ENCODE measurements at regions of chr1 and their contacts with region 1.

Region 1: GRCh38 chr1:98794196-98794886 is 132.8 kb downstream of the SNX7 start:
- ATAC-seq: peak; percentile 44 to 95 (median 73)
- H3K4me3 ChIP-seq: no peak overlapping the region
- H3K27ac ChIP-seq: no peak overlapping the region
- H3K4me1 ChIP-seq: no peaks in the 10 kb centered on the region

Region 2: DNA sequence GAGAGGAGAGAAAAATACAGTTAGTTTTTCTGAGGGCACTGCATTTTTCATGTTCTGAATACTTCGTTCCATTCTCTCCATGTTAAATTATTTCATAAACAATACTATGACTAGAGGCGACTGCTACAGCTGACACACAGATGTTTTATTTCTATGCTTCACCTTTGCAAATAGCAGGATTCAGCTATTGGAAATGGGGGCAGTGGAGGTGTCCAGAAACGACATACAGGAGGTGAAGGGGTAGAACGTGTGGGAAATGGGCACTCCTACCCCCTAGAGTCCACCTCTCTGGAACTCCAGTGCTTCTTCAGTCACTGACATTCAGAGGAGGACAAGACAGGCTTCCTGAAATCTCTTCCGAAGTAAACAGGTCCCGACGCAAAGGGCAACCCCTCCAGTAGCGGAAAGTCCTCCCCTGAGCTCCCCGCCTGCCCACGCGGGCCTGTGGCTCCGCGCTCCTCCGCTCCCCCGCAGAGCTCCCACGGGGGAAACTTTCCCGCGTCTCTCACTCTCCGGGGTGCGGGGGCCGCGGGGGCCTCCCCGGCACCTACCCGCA is 874.0 kb before region 1 on chr1:
- in situ Hi-C with region 1: no loop called
- ATAC-seq: peak in 7 of 8 experiments; percentile 28 to 54 (median 42)
- H3K4me3 ChIP-seq: peak overlapping the region; percentile 70 to 84 (median 79)
- H3K27ac ChIP-seq: peak overlapping the region; percentile 5 to 50
- H3K4me1 ChIP-seq: peaks cover 6 to 23% of the 10 kb centered on the region in 2 donors

Region 3: GRCh38 chr1:99170516-99170915 is 376.2 kb after region 1 on chr1:
- in situ Hi-C with region 1: loop called in 1 of 9 experiments (anchors 25 kb)
- ATAC-seq: peak in 2 of 8 experiments; percentile 59 to 65
- H3K4me3 ChIP-seq: no peak overlapping the region
- H3K27ac ChIP-seq: no peak overlapping the region
- H3K4me1 ChIP-seq: no peaks in the 10 kb centered on the region

Region 4: GRCh38 chr1:99481391-99481996 is 687.2 kb after region 1 on chr1:
- in situ Hi-C with region 1: loop called in 3 of 9 experiments (anchors 25 kb)
- ATAC-seq: peak; percentile 60 to 88 (median 65)
- H3K4me3 ChIP-seq: no peak overlapping the region
- H3K27ac ChIP-seq: no peak overlapping the region
- H3K4me1 ChIP-seq: peaks cover 3 to 5% of the 10 kb centered on the region in 2 donors

Region 5: GRCh38 chr1:99707535-99708142 is 913.3 kb after region 1 on chr1:
- in situ Hi-C with region 1: loop called in 2 of 9 experiments (anchors 25 kb)
- ATAC-seq: peak; percentile 52 to 87 (median 72)
- H3K4me3 ChIP-seq: no peak overlapping the region
- H3K27ac ChIP-seq: no peak overlapping the region
- H3K4me1 ChIP-seq: peaks cover 3% of the 10 kb centered on the region in 2 donors

Region 6: DNA sequence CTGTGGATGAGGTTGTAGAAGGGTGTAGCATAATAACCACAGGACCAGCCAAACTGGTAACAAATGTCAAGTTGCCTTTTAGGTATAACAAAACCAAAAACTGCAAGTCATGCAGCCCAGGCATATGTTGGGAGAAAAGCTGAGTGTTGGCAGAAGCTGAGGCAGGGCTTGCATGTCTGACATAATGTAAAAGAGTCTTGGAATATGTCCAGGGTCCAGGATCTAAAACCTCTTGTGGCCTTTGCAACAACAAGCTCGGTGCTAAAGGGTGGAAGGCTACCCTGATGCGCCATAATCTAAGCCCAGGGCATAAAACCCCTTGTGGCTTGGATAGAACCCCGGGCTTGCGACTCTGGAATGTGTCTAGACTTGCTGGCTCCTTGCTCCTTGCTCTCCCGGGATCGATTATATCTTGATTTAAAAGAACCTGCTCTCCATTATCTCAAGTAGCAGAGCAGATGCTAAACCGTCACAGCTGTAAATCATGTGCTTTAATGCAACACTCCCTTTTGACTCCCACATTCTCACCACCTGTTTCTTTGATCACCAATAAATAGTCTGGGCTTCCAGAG is 1149.0 kb after region 1 on chr1:
- in situ Hi-C with region 1: no loop called
- ATAC-seq: peak in 2 of 8 experiments; percentile 70 to 91
- H3K4me3 ChIP-seq: no peak overlapping the region
- H3K27ac ChIP-seq: no peak overlapping the region
- H3K4me1 ChIP-seq: no peaks in the 10 kb centered on the region